ENCODE measurements at regions of chr19 and their contacts with region 1.

Region 1: DNA sequence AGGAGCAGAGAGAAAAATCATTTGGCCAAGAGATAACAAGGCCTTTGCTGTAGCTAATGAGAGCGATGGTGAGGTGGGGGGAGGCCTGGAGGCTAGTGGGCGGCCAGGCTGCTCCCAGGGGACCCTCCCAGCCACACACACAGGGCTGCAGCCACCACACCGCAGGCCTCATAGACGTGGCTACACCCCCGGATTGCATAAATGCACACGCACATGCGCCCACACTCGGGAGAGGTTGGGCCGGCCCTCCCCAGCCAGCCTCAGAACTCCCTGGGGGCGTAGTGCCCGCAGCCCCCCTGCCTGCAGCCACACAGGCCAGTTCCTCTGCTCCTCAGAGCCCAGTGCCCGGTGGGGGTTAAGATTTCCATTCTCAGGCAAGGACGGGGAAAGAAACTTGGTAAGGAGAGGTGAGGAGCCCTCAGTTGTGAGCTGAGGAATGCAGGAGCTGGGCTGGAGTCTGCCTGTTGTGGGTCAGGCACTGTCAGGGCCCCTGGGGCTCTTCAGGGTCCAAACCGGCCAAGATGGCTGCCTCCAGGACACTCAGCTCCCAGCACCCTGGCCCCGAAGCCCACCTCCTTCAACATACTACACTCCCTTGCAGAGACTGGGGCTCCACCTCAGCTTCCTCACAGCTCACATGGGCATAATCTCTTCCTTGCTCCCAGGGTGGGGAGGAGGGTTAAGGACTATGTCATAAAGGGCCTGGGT is 8.0 kb downstream of the PTH2 start:
- DNase-seq: no peak
- H3K4me3 ChIP-seq: no peak overlapping the region
- H3K27me3 ChIP-seq: peaks cover 21% of the 10 kb centered on the region
- CTCF ChIP-seq: no peak

Region 2: GRCh38 chr19:49425922-49426592 is 10.8 kb after region 1 on chr19:
- CTCF ChIA-PET with region 1: interaction called, 10 read pairs
- POLR2A ChIA-PET with region 1: no interaction called
- DNase-seq: no peak
- H3K4me3 ChIP-seq: no peak overlapping the region
- H3K27me3 ChIP-seq: peaks cover 82% of the 10 kb centered on the region
- CTCF ChIP-seq: no peak

Region 3: GRCh38 chr19:49453757-49454240 is 38.5 kb after region 1 on chr19:
- CTCF ChIA-PET with region 1: no interaction called
- POLR2A ChIA-PET with region 1: no interaction called
- DNase-seq: no peak
- H3K4me3 ChIP-seq: peak overlapping the region; percentile 79
- H3K27me3 ChIP-seq: no peaks in the 10 kb centered on the region
- CTCF ChIP-seq: no peak

Measured in BJ (cell line).